ENCODE measurements at regions of chr1 and their contacts with region 1.

Region 1: GRCh38 chr1:75265792-75266191 is 131.6 kb downstream of the LHX8 start:
- DNase-seq: peak in 2 of 9 experiments; percentile 6 to 40
- ATAC-seq: no peak
- H3K4me3 ChIP-seq: no peak overlapping the region
- H3K4me3 Mint-ChIP-seq: no peak overlapping the region
- H3K27ac ChIP-seq: no peak overlapping the region
- H3K27ac Mint-ChIP-seq: no peak overlapping the region
- H3K4me1 ChIP-seq: no peaks in the 10 kb centered on the region
- H3K4me1 Mint-ChIP-seq: no peaks in the 10 kb centered on the region
- H3K27me3 ChIP-seq: no peaks in the 10 kb centered on the region
- H3K27me3 Mint-ChIP-seq: no peaks in the 10 kb centered on the region
- CTCF ChIP-seq: no peak

Region 2: DNA sequence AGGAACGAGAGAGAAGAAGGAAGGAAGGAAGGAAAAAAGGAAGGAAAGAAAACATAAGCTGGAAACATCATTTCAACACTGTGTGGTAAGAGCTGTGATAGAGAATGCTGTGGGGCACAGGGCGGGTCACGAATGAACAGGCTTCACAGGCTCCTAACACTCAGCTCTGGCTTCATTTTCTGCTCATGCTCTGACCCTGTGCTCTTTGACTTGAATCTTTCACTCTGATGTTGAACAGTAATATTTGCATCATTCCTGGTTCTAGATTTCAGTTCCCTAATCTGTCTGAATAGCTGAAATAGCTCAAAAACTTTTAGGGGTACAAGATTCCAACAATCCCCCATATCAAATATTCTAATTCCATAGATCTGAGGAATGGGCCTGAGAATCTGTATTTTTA is 75.7 kb after region 1 on chr1:
- CTCF ChIA-PET with region 1: no interaction called
- POLR2A ChIA-PET with region 1: no interaction called
- intact Hi-C with region 1: no loop called
- DNase-seq: no peak
- ATAC-seq: no peak
- H3K4me3 ChIP-seq: no peak overlapping the region
- H3K4me3 Mint-ChIP-seq: no peak overlapping the region
- H3K27ac ChIP-seq: no peak overlapping the region
- H3K27ac Mint-ChIP-seq: no peak overlapping the region
- H3K4me1 ChIP-seq: no peaks in the 10 kb centered on the region
- H3K4me1 Mint-ChIP-seq: no peaks in the 10 kb centered on the region
- H3K27me3 ChIP-seq: no peaks in the 10 kb centered on the region
- H3K27me3 Mint-ChIP-seq: no peaks in the 10 kb centered on the region
- CTCF ChIP-seq: no peak

Region 3: DNA sequence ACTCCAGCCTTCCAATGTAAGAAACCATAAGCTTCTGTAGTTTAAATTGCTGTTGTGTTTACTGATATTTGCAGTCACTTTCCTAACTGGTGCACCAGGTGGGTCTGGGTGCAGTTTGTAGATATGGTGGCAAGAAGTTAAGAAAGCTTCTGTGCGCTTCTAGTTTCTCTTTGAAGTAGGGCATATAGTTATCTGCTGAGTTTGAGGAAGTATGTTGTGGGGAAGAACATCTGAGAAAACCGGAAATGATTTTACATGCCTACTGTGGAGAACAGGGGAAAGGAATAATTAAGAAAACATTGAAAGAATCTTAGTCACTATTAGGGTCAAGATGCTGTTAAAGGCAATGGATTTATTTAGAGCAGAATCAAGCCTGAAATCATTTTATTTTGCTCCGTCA is 360.0 kb after region 1 on chr1:
- CTCF ChIA-PET with region 1: no interaction called
- POLR2A ChIA-PET with region 1: no interaction called
- intact Hi-C with region 1: loop called in 1 of 2 experiments (anchors 10 kb)
- DNase-seq: no peak
- ATAC-seq: no peak
- H3K4me3 ChIP-seq: no peak overlapping the region
- H3K4me3 Mint-ChIP-seq: no peak overlapping the region
- H3K27ac ChIP-seq: no peak overlapping the region
- H3K27ac Mint-ChIP-seq: no peak overlapping the region
- H3K4me1 ChIP-seq: no peaks in the 10 kb centered on the region
- H3K4me1 Mint-ChIP-seq: no peaks in the 10 kb centered on the region
- H3K27me3 ChIP-seq: no peaks in the 10 kb centered on the region
- H3K27me3 Mint-ChIP-seq: peaks cover 26% of the 10 kb centered on the region
- CTCF ChIP-seq: no peak

Region 4: DNA sequence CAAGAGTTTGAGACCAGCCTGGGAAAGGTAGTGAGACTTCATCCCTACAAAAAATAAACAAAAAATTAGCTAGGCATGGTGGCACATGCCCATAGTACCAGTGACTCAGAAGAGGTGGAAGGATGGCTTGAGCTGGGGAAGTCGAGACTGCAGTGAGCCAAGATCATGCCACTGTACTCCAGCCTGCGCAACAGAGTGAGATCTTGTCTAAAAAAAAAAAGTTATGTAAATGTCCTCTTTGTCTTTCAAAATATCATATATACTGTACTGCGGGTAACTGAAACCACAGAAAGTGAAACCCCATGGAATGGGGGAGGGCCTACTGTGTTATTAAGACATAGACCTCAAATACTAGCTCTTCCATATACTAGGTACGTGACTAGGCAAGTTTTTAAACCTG is 479.5 kb after region 1 on chr1:
- CTCF ChIA-PET with region 1: no interaction called
- POLR2A ChIA-PET with region 1: no interaction called
- intact Hi-C with region 1: no loop called
- DNase-seq: no peak
- ATAC-seq: no peak
- H3K4me3 ChIP-seq: no peak overlapping the region
- H3K4me3 Mint-ChIP-seq: no peak overlapping the region
- H3K27ac ChIP-seq: no peak overlapping the region
- H3K27ac Mint-ChIP-seq: peak overlapping the region; percentile 25
- H3K4me1 ChIP-seq: no peaks in the 10 kb centered on the region
- H3K4me1 Mint-ChIP-seq: peaks cover 4% of the 10 kb centered on the region
- H3K27me3 ChIP-seq: no peaks in the 10 kb centered on the region
- H3K27me3 Mint-ChIP-seq: no peaks in the 10 kb centered on the region
- CTCF ChIP-seq: no peak

Measured in CD8-positive, alpha-beta T cell (primary cell).